GM12878 (cell line): ENCODE measurements at regions of chr7 and their contacts with region 1.

Region 1: DNA sequence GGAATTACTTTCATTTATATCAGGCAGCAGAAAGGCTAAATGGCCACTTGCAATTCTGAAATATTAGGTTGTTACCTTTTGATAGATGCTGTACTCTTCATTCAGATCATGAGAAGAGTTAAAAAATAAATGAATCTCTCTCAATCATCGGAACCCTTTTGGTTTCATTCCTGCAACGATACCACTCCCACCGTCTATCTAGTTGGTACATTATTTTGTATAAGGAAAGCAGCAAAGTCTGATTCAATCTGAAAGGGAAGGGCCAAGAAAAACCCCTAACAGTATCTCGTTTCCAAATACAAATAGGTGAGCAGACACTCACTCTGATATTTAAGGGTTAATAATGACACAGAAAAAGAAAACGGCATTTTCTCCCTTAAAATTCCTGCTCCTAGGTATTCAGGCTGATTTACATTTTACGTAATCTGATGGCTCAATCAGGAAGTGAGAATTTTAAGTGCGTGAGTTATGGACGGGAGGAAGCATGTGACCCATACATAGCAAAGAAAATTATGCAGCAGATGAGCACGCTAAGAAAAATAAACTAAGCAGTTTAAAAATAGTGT is 209.4 kb upstream of the KLF14 start:
- DNase-seq: no peak
- ATAC-seq: peak; percentile 22
- H3K4me3 ChIP-seq: peak overlapping the region; percentile 39
- H3K27ac ChIP-seq: peak overlapping the region; percentile 78
- H3K4me1 ChIP-seq: peaks cover 36% of the 10 kb centered on the region
- H3K27me3 ChIP-seq: no peaks in the 10 kb centered on the region
- CTCF ChIP-seq: no peak
- EP300 ChIP-seq: peak in 1 of 2 experiments; percentile 43; a peak in 2 of 4 replicates
- POLR2A ChIP-seq: no peak
- RAD21 ChIP-seq: no peak

Region 2: DNA sequence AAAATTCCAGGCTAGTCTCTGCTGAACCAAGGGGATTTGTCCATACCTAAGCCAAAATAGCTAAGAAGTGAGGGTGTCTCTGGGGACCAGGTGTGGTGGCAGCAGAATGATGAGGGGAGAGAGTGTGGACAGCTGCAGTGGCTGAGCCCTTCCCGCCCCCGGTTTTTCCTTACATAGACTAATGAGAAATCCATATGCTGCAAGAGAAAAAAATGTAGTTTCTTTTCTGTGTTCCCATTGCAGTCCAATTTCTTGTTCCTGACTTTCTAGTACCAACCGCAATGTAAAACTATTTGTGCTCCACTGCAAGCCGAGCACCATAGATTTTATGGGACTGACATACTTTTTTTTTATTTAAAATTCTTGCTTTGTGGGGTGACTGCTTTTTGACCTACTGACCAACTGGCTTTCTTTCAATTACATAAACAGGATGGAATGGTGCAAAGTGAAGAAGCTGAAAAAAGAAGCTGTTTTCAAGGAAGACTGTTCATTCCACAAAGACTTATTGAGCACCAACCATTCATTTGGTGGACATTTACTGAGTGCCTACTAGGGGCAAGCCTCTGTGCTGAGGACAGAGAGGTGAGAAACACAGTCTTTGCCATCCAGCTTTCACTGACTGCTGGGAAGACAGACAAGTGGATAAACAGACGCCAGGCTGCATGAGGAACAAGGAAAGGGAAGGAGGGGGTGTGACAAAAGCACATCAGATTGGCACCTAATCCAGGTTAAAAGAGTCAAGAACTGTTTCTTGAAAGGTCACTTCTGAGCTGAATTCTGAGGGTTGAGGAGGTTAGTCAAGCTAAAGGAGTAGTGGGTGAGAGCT is 512.4 kb before region 1 on chr7:
- CTCF ChIA-PET with region 1: no interaction called
- POLR2A ChIA-PET with region 1: no interaction called
- RAD21 ChIA-PET with region 1: no interaction called
- SMC1A ChIA-PET with region 1: no interaction called
- in situ Hi-C with region 1: no loop called
- intact Hi-C with region 1: no loop called
- DNase-seq: no peak
- ATAC-seq: no peak
- H3K4me3 ChIP-seq: no peak overlapping the region
- H3K27ac ChIP-seq: no peak overlapping the region
- H3K4me1 ChIP-seq: no peaks in the 10 kb centered on the region
- H3K27me3 ChIP-seq: no peaks in the 10 kb centered on the region
- CTCF ChIP-seq: no peak
- EP300 ChIP-seq: no peak
- POLR2A ChIP-seq: no peak
- RAD21 ChIP-seq: no peak

Region 3: GRCh38 chr7:130929896-130930659 is 13.3 kb before region 1 on chr7:
- CTCF ChIA-PET with region 1: interaction called, 5 read pairs
- POLR2A ChIA-PET with region 1: interaction called, 10 read pairs
- RAD21 ChIA-PET with region 1: interaction called, 4 read pairs
- SMC1A ChIA-PET with region 1: interaction called, 38 read pairs
- in situ Hi-C with region 1: no loop called
- intact Hi-C with region 1: no loop called
- DNase-seq: no peak
- ATAC-seq: peak; percentile 8; the same call in 2 of the 3 replicates
- H3K4me3 ChIP-seq: no peak overlapping the region
- H3K27ac ChIP-seq: peak overlapping the region; percentile 32
- H3K4me1 ChIP-seq: peaks cover 8% of the 10 kb centered on the region
- H3K27me3 ChIP-seq: no peaks in the 10 kb centered on the region
- CTCF ChIP-seq: no peak
- EP300 ChIP-seq: no peak
- POLR2A ChIP-seq: peak; percentile 25; the same call in 1 of the 2 replicates
- RAD21 ChIP-seq: no peak

Region 4: GRCh38 chr7:131327626-131328376 is 384.4 kb after region 1 on chr7 and contains the start of gene MKLN1:
- CTCF ChIA-PET with region 1: no interaction called
- POLR2A ChIA-PET with region 1: no interaction called
- RAD21 ChIA-PET with region 1: no interaction called
- SMC1A ChIA-PET with region 1: no interaction called
- in situ Hi-C with region 1: no loop called
- intact Hi-C with region 1: no loop called
- DNase-seq: peak; percentile 35
- ATAC-seq: peak; percentile 95
- H3K4me3 ChIP-seq: peak within 1 kb of the TSS; percentile 88
- H3K27ac ChIP-seq: peak within 1 kb of the TSS; percentile 97
- H3K4me1 ChIP-seq: 0 out of 2 replicates have a peak, but pooled peaks cover 3% of the 10 kb centered on the region
- H3K27me3 ChIP-seq: no peaks in the 10 kb centered on the region
- CTCF ChIP-seq: no peak
- EP300 ChIP-seq: peak in 1 of 2 experiments; percentile 22; a peak in 1 of 4 replicates
- POLR2A ChIP-seq: peak; percentile 99
- RAD21 ChIP-seq: no peak
- polyA plus RNA-seq, gene MKLN1: 16.4 to 31.8 TPM

Region 5: DNA sequence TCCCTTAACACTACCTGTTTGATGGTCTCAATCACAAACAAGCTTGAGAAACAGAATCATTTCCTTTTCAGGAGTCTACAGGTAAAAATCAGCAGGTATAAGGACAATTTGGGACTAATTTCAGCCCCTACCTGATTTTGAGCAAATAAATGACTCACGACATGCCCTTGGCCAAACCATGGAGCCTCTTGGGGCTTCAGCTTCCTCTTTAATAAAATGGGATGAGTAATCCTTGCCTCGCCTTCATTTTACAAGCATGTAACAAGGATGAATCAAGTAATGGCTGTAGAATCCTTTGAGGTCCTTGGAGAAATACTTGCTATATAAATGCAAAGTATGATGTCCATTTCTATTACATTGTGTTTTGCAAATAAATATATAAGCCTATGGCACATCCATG is 825.8 kb after region 1 on chr7:
- CTCF ChIA-PET with region 1: no interaction called
- POLR2A ChIA-PET with region 1: no interaction called
- RAD21 ChIA-PET with region 1: no interaction called
- SMC1A ChIA-PET with region 1: no interaction called
- in situ Hi-C with region 1: no loop called
- intact Hi-C with region 1: no loop called
- DNase-seq: no peak
- ATAC-seq: no peak
- H3K4me3 ChIP-seq: no peak overlapping the region
- H3K27ac ChIP-seq: no peak overlapping the region
- H3K4me1 ChIP-seq: no peaks in the 10 kb centered on the region
- H3K27me3 ChIP-seq: no peaks in the 10 kb centered on the region
- CTCF ChIP-seq: no peak
- EP300 ChIP-seq: no peak
- POLR2A ChIP-seq: no peak
- RAD21 ChIP-seq: no peak